Activated T-helper 1 cell treated with anti-CD3 and anti-CD28 coated beads, Interleukin-12 subunit alpha, Interleukin-12 subunit beta, Interleukin-2, Interleukin-4 antibody, amounts not matched to agents 30 ng/mL and 10 ng/mL and 1 ng/mL, durations not matched to agents 14 hours and 24 hours and 36 hours (primary cell): ENCODE measurements at regions of chr5 and their contacts with region 1.

Region 1: GRCh38 chr5:173293817-173294672 is 34.2 kb downstream of the STC2 start:
- DNase-seq: peak; percentile 64
- H3K4me3 Mint-ChIP-seq: peak overlapping the region; percentile 46
- H3K27ac Mint-ChIP-seq: no peak overlapping the region
- H3K4me1 Mint-ChIP-seq: peaks cover 15% of the 10 kb centered on the region
- H3K27me3 Mint-ChIP-seq: peaks cover 34% of the 10 kb centered on the region

Region 2: GRCh38 chr5:173256800-173257199 is 37.2 kb before region 1 on chr5:
- intact Hi-C with region 1: no loop called
- DNase-seq: no peak
- H3K4me3 Mint-ChIP-seq: no peak overlapping the region
- H3K27ac Mint-ChIP-seq: no peak overlapping the region
- H3K4me1 Mint-ChIP-seq: no peaks in the 10 kb centered on the region
- H3K27me3 Mint-ChIP-seq: peaks cover 34% of the 10 kb centered on the region

Region 3: GRCh38 chr5:173572431-173573125 is 278.5 kb after region 1 on chr5:
- intact Hi-C with region 1: loop called (anchors 1 kb)
- DNase-seq: no peak
- H3K4me3 Mint-ChIP-seq: no peak overlapping the region
- H3K27ac Mint-ChIP-seq: no peak overlapping the region
- H3K4me1 Mint-ChIP-seq: no peaks in the 10 kb centered on the region
- H3K27me3 Mint-ChIP-seq: peaks cover 19% of the 10 kb centered on the region

Region 4: GRCh38 chr5:173972925-173973615 is 679.0 kb after region 1 on chr5:
- intact Hi-C with region 1: loop called (anchors 1 kb)
- DNase-seq: peak; percentile 53
- H3K4me3 Mint-ChIP-seq: peak overlapping the region; percentile 81
- H3K27ac Mint-ChIP-seq: peak overlapping the region; percentile 18
- H3K4me1 Mint-ChIP-seq: peaks cover 12% of the 10 kb centered on the region
- H3K27me3 Mint-ChIP-seq: peaks cover 32% of the 10 kb centered on the region